ENCODE measurements at regions of chr10 and their contacts with region 1.

Region 1: DNA sequence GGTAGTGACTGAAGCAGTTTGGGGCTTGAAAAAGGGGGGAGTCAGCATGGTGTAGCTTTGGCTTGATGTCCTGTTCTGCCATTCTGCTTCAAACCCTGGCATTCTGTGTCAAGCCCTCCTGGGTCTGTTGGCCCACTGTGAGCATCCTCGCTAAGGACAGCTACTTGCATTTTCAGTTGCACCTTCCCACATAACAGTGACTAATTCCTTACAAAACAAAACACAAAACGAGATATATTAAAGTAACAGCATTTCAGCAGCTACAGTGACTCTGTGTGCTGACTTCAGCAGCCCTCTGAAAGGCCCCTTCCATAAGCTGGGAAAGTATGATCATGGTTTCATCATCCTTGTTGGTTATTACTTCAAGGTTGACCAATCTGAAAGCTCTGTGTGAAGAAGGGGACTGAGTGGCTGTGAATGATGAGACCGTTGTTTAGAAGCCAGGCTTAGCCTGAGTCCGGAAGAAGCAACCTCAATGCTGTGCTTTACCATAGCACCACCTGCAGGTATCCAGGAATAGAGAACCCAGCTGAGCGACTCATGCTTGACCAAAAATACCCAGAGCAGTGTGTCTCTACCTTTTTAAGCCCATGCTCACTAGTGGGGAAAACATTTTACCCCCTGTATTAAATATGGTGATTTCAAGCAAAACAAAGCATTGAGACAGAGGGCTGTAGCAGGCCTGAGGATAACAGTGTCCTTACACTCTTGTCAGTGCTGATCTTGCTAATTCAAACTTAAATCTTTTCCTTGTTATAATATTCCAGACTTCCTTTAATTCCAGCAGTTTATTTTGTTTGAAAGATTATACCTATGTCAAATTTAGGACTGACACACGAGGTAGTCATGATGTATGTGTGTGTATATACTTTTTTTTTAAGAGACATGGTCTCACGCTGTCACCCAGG is 42.6 kb upstream of the CC2D2B start:
- DNase-seq: peak; percentile 63
- H3K4me3 ChIP-seq: no peak overlapping the region
- H3K27ac ChIP-seq: peak overlapping the region; percentile 0
- H3K27me3 ChIP-seq: no peaks in the 10 kb centered on the region
- CTCF ChIP-seq: peak; percentile 87

Region 2: GRCh38 chr10:95688648-95689047 is 176.5 kb before region 1 on chr10:
- CTCF ChIA-PET with region 1: interaction called, 238 read pairs
- POLR2A ChIA-PET with region 1: interaction called, 7 read pairs
- DNase-seq: no peak
- H3K4me3 ChIP-seq: no peak overlapping the region
- H3K27ac ChIP-seq: no peak overlapping the region
- H3K27me3 ChIP-seq: no peaks in the 10 kb centered on the region
- CTCF ChIP-seq: no peak

Region 3: DNA sequence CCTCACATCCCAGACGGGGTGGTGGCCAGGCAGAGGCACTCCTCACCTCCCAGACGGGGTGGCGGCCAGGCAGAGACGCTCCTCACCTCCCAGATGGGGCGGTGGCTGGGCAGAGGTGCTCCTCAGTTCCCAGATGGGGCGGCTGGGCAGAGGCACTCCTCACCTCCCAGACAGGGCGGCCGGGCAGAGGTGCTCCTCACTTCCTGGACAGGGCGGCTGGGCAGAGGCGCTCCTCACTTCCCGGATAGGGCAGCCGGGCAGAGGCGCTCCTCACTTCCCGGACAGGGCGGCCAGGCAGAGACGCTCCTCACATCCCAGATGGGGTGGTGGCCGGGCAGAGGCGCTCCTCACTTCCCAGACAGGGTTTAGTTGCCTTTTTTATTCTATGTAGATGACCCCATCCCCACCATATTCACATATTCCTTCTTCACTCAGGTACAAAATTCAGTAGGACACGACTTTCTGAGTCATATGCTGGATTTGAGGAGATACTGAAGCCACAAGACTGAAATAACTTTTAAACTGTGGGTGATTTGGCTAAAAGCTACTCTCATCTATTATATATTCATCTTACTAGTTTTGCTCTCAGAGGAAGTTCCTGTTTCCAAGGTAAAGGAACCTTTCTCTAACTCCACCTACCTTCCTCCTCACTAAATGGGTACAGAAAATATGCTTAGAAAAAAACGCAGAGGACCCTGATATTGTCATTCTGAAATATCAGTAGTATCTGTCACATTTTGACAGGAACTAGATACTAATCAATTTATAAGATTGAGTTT is 54.8 kb before region 1 on chr10:
- CTCF ChIA-PET with region 1: no interaction called
- POLR2A ChIA-PET with region 1: no interaction called
- DNase-seq: no peak
- H3K4me3 ChIP-seq: no peak overlapping the region
- H3K27ac ChIP-seq: no peak overlapping the region
- H3K27me3 ChIP-seq: no peaks in the 10 kb centered on the region
- CTCF ChIP-seq: no peak

Region 4: GRCh38 chr10:95848841-95849240 is 16.3 kb before region 1 on chr10:
- CTCF ChIA-PET with region 1: interaction called, 85 read pairs
- POLR2A ChIA-PET with region 1: no interaction called
- DNase-seq: no peak
- H3K4me3 ChIP-seq: no peak overlapping the region
- H3K27ac ChIP-seq: no peak overlapping the region
- H3K27me3 ChIP-seq: no peaks in the 10 kb centered on the region
- CTCF ChIP-seq: no peak

Region 5: DNA sequence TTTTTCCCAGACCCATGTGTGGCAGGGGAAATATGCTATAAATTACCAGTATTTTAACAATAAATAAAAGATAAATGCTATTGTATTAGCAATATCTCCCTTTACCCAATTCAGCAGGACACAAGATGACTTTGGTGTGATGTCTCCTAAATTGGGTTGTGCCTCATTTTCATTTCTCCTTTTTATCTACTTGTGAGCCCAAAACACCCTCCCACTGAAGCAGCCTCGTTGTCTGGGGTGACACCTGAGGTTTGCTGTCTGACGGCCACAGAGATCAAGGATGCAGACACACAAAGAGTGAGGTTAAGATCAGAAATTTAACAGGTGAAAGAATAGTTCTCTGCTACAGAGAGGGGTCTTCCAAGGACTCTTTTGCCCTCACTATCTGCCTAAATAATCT is 15.5 kb after region 1 on chr10:
- CTCF ChIA-PET with region 1: interaction called, 11 read pairs
- POLR2A ChIA-PET with region 1: no interaction called
- DNase-seq: no peak
- H3K4me3 ChIP-seq: no peak overlapping the region
- H3K27ac ChIP-seq: no peak overlapping the region
- H3K27me3 ChIP-seq: no peaks in the 10 kb centered on the region
- CTCF ChIP-seq: no peak

Region 6: DNA sequence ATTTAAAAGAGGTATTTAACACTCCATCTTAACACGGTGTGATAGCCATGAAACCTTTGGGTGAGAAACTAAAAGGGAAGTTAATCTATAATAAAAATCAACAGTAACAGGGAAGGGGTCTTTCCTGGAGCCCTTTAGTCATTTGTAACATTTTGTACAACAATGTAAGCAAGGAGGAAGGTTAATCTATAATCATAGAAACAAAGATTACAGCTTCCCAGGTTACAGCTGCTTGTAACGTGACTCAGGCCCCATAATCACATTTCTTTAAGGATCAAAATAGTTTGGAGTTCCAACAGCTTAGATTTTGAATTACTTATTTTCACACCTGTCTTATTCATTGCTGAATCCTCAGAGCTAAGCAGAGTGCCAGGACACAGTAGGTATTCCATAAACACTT is 24.7 kb after region 1 on chr10:
- CTCF ChIA-PET with region 1: interaction called, 11 read pairs
- POLR2A ChIA-PET with region 1: no interaction called
- DNase-seq: no peak
- H3K4me3 ChIP-seq: no peak overlapping the region
- H3K27ac ChIP-seq: no peak overlapping the region
- H3K27me3 ChIP-seq: no peaks in the 10 kb centered on the region
- CTCF ChIP-seq: no peak

Region 7: DNA sequence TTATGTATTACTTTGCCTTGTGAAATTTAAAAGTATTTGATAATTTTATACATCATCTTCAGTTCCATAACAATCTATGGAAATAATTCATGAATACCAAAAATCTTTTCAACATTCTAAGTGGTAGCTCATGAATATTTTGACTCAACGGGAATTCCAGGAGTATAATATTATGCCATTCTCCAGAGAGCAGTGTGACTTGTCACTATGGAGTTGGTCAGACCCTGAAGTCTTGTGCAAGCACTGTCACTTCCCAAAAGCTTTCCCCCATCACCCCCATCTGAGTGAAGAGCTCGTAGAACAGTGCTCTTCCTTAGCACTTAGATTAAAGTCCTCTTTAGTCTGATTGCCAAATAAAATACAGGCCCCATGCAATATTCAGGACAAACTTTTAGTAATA is 148.8 kb after region 1 on chr10:
- CTCF ChIA-PET with region 1: no interaction called
- POLR2A ChIA-PET with region 1: no interaction called
- DNase-seq: no peak
- H3K4me3 ChIP-seq: no peak overlapping the region
- H3K27ac ChIP-seq: no peak overlapping the region
- H3K27me3 ChIP-seq: no peaks in the 10 kb centered on the region
- CTCF ChIP-seq: no peak